ENCODE measurements at regions of chr6 and their contacts with region 1.

Region 1: GRCh38 chr6:85482905-85483700 is 33.2 kb downstream of the NT5E start:
- H3K4me3 Mint-ChIP-seq: no peak overlapping the region
- H3K27ac Mint-ChIP-seq: no peak overlapping the region
- H3K4me1 Mint-ChIP-seq: no peaks in the 10 kb centered on the region
- H3K27me3 Mint-ChIP-seq: peaks cover 7% of the 10 kb centered on the region

Region 2: DNA sequence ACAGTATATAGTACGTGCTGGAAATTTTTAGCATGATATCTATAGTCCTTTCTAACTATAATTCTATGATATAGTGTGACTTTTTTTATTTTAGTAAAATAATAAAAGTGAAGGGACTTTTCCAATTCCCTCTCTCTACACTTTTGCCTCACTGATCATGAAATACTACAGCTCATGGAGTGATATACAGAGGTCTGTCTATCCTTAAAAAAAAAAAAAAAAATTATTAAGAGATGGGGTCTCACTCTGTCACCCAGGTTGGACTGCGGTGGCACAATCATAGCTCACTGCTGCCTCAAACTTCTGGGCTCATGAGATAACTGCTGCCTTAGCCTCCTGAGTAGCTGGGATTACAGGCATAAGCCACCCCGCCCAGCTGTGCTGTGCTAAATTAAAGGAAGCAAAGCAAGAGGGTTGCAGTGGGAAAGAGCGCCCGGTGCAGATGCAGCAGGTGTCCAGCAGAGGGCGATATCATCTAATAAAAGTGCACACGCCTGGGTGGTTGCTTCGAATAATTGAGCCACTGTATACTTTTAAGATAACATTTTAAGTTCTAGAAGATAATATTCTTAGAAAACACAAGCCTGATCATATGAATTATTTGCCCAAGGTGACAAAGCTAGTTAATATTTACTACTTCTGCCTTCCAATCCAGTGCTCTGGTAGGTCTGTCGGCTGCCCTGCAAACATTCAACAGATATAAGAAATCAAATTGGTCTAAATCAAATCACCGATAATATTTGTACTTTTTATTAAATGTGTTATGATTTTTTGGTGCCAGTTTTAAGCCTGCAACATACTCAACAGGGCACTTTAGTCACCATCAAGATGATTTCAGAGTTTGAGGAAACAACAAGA is 128.1 kb before region 1 on chr6:
- intact Hi-C with region 1: loop called (anchors 1 kb)
- H3K4me3 Mint-ChIP-seq: no peak overlapping the region
- H3K27ac Mint-ChIP-seq: no peak overlapping the region
- H3K4me1 Mint-ChIP-seq: no peaks in the 10 kb centered on the region
- H3K27me3 Mint-ChIP-seq: peaks cover 4% of the 10 kb centered on the region

Measured in dendritic cell treated with granulocyte-macrophage colony-stimulating factor and Interleukin-4, amounts not matched to agents 40 ng/mL and 50 ng/mL, for 4 days (primary cell).